Dorsolateral prefrontal cortex (tissue), 120 donors: ENCODE measurements at regions of chr14 and their contacts with region 1.

Region 1: GRCh38 chr14:34098045-34098984 is 147.4 kb upstream of the EGLN3 start:
- DNase-seq: peak in 7 of 10 donors; percentile 25 to 72 (median 50)
- H3K4me3 ChIP-seq: no peak overlapping the region
- H3K27ac ChIP-seq: peak overlapping the region in 23 of 59 donors; percentile 3 to 62 (median 14)
- H3K27me3 ChIP-seq: peaks cover 0 to 2% (median 0%) of the 10 kb centered on the region in 45 donors
- CTCF ChIP-seq: peak; percentile 63 to 88 (median 76)

Region 2: GRCh38 chr14:33938131-33938949 is 160.0 kb before region 1 on chr14:
- intact Hi-C with region 1: loop called in 1 of 2 experiments (anchors 10 kb)
- DNase-seq: peak in 8 of 10 donors; percentile 39 to 68 (median 60)
- H3K4me3 ChIP-seq: peak overlapping the region in 52 of 59 donors; percentile 2 to 61 (median 32)
- H3K27ac ChIP-seq: peak overlapping the region in 58 of 59 donors; percentile 12 to 88 (median 72)
- H3K27me3 ChIP-seq: no peaks in the 10 kb centered on the region
- CTCF ChIP-seq: peak in 1 of 56 donors; percentile 12

Region 3: DNA sequence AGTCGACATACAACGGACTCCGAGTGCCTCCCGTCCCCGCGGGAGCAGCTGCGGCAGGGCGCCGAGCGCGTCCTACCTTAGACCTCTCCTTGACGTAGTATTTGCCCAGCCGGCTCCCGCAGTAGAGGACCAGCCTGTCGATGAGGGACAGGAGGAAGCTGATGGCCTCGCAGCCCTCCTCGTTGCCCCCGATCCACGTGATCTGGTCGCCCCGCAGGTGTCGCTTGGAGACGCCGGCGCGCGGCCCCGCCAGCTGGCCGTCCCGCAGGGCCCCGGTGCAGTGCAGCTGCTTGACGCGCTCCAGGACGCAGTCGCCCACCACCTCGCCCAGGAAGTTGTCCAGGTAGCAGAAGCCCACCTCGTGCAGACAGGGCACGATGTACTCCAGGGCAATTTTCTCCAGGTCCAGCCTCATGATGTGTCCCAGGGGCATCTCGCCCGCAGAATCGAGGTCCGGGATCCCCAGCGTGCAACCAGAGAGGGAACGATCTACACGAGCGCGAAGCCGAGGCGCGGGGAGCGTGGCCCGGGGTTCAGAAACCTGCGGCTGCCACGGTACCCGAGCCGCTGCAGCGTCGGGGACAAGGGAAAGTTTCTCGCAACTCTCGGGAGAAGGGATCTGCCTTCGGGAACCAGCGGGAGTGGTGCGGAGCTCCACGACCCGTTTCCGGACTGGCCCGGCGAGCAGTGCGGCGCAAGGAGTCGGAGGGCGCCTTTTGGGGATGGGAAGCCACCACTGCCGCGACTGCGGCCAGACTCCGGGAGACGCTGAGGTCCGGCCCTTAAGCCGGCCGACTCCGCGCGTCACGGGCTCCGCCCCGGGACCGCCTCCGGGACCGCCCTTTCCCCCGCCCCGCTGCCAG is 147.8 kb before region 1 on chr14 and contains the start of gene EGLN3:
- intact Hi-C with region 1: loop called (anchors 5 to 10 kb)
- DNase-seq: peak; percentile 81 to 96 (median 92)
- H3K4me3 ChIP-seq: peak within 1 kb of the TSS; percentile 54 to 98 (median 76)
- H3K27ac ChIP-seq: peak within 1 kb of the TSS in 57 of 59 donors; percentile 1 to 91 (median 79)
- H3K27me3 ChIP-seq: peaks cover 0 to 53% (median 11%) of the 10 kb centered on the region in 45 donors
- CTCF ChIP-seq: peak in 11 of 56 donors; percentile 8 to 35 (median 17)
- total RNA-seq, gene EGLN3: 20.5 to 69.6 (median 37.7) TPM

Region 4: DNA sequence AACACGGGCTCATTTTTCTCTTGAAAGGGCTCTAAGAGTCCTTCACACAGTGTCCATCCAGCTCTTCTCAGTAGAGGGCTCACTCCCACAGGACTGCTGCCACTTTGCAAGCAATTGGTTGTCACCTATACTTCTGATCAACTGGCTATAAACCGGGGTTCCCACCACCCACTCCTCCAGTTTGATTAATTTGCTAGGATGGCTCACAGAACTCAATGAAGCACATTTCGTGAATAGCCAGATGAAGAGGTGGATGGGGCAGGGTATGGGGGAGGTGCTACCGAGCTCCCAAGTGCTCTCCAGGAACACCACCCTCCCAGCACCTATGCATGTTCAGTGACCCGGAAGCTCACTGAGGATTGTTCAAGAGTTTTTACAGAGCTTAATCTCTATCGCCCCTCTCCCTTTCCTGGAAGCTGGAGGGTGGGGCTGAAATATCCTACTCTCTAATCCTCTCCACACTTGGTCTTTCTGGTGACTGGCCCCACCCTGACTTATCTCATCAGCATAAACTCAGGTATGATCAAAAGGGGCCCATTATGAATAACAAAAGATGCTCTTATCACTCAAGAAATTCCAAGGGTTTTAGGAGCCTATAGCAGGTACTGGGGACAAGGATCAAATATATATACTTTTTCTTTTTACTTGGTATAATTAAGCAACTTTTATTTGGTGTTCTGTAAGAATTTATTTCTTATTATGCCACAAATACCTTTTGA is 133.6 kb before region 1 on chr14:
- intact Hi-C with region 1: loop called in 1 of 2 experiments (anchors 5 kb)
- DNase-seq: no peak
- H3K4me3 ChIP-seq: no peak overlapping the region
- H3K27ac ChIP-seq: peak overlapping the region in 17 of 59 donors; percentile 18 to 93 (median 51)
- H3K27me3 ChIP-seq: peaks cover 0 to 6% (median 0%) of the 10 kb centered on the region in 45 donors
- CTCF ChIP-seq: peak in 16 of 56 donors; percentile 14 to 46 (median 22)

Region 5: GRCh38 chr14:34300882-34301734 is 202.8 kb after region 1 on chr14:
- intact Hi-C with region 1: loop called in 1 of 2 experiments (anchors 5 kb)
- DNase-seq: peak in 1 of 10 donors; percentile 35
- H3K4me3 ChIP-seq: no peak overlapping the region
- H3K27ac ChIP-seq: peak overlapping the region in 27 of 59 donors; percentile 2 to 74 (median 48)
- H3K27me3 ChIP-seq: no peaks in the 10 kb centered on the region
- CTCF ChIP-seq: peak; percentile 56 to 87 (median 76)

Region 6: DNA sequence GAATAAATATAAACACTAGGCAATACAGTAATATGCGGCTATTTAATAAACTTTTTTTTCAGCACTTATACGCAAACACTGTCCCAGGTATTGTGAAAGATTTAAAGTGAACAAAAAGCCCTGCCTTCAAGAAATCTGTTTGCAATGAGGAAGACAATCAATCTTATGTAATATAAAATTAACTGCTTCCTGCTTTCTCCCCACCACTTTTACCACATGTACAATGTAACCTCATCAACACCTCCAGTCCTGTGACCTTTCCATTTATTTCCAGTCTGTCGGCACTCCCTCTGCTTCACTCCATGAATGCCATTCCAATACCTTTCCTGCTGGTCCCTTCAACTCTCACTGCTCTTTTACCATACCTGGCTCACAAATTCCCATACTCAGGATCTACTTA is 521.2 kb after region 1 on chr14:
- intact Hi-C with region 1: no loop called
- DNase-seq: no peak
- H3K4me3 ChIP-seq: no peak overlapping the region
- H3K27ac ChIP-seq: peak overlapping the region in 2 of 59 donors; percentile 22 to 36
- H3K27me3 ChIP-seq: no peaks in the 10 kb centered on the region
- CTCF ChIP-seq: no peak